ENCODE measurements at regions of chr15 and their contacts with region 1.

Region 1: GRCh38 chr15:90320061-90320884 is 31.8 kb upstream of the ZNF774 start:
- DNase-seq: peak; percentile 77
- ATAC-seq: peak; percentile 99
- H3K4me3 Mint-ChIP-seq: no peak overlapping the region
- H3K27ac Mint-ChIP-seq: no peak overlapping the region
- H3K4me1 Mint-ChIP-seq: peaks cover 2% of the 10 kb centered on the region
- H3K27me3 Mint-ChIP-seq: no peaks in the 10 kb centered on the region
- CTCF ChIP-seq: peak; percentile 97

Region 2: GRCh38 chr15:90071208-90071807 is 249.0 kb before region 1 on chr15:
- CTCF ChIA-PET with region 1: no interaction called
- POLR2A ChIA-PET with region 1: no interaction called
- intact Hi-C with region 1: no loop called
- DNase-seq: peak; percentile 93
- ATAC-seq: peak; percentile 94
- H3K4me3 Mint-ChIP-seq: no peak overlapping the region
- H3K27ac Mint-ChIP-seq: no peak overlapping the region
- H3K4me1 Mint-ChIP-seq: peaks cover 17% of the 10 kb centered on the region
- H3K27me3 Mint-ChIP-seq: no peaks in the 10 kb centered on the region
- CTCF ChIP-seq: peak; percentile 86

Region 3: GRCh38 chr15:90300988-90301706 is 19.1 kb before region 1 on chr15:
- CTCF ChIA-PET with region 1: interaction called, 90 read pairs
- POLR2A ChIA-PET with region 1: no interaction called
- intact Hi-C with region 1: no loop called
- DNase-seq: peak; percentile 82
- ATAC-seq: peak; percentile 82
- H3K4me3 Mint-ChIP-seq: no peak overlapping the region
- H3K27ac Mint-ChIP-seq: no peak overlapping the region
- H3K4me1 Mint-ChIP-seq: peaks cover 30% of the 10 kb centered on the region
- H3K27me3 Mint-ChIP-seq: peaks cover under 1% of the 10 kb centered on the region
- CTCF ChIP-seq: peak; percentile 89

Region 4: DNA sequence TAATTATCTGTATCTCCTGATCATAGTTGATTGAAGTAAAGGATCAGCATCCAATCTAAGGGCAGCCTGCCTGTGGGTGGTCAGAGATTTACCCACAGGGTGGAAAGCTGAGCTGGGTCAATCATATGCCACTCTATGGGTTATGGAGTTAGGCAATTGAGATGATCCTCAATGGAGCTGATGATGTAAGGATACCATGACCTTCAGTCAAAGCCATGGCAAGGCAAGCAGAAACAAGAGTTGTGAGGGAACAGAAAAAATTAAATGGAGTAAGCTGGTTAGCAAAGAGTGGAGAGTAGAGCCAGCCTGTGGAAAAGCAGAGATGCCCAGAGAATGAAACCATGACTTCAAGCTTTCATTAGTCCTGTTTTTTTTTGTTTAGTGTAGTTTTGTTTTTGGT is 62.0 kb after region 1 on chr15:
- CTCF ChIA-PET with region 1: interaction called, 12 read pairs
- POLR2A ChIA-PET with region 1: no interaction called
- intact Hi-C with region 1: no loop called
- DNase-seq: no peak
- ATAC-seq: no peak
- H3K4me3 Mint-ChIP-seq: no peak overlapping the region
- H3K27ac Mint-ChIP-seq: no peak overlapping the region
- H3K4me1 Mint-ChIP-seq: peaks cover 24% of the 10 kb centered on the region
- H3K27me3 Mint-ChIP-seq: no peaks in the 10 kb centered on the region
- CTCF ChIP-seq: no peak

Region 5: DNA sequence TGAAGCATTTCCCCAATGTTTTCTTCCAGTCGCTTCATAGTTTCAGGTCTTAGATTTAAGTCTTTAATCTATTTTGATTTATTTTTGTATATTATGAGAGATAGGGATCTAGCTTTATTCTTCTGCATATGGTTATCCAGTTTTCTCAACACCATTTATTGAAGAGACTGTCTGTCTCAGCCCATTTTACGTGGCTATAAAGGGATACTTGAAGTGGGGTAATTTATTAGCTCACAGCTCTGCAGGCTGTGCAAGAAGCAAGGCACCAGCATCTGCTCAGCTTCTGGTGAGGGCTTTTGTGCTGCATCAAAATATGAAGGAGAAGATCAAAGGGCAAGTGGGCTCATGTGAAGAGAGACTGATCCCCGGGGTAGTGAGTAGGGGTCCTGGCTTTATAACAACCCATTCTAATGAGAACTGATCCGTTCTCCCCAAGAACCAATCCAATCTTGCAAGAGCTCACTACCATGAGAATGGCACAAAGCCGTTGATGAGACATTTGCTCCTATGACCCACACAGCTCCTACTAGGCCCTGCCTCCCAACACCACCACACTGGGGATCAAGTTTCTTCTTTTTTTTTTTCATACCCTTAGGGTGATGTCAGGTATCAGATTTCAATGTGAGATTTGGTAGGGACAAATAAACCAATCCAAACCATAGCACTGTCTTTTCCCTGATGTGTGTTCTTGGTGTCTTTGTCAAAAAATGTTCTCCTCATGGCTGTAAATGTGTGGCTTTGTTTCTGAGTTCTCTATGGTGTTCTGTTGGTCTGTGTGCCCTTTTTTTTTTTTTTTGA is 131.0 kb after region 1 on chr15:
- CTCF ChIA-PET with region 1: interaction called, 40 read pairs
- POLR2A ChIA-PET with region 1: no interaction called
- intact Hi-C with region 1: no loop called
- DNase-seq: no peak
- ATAC-seq: no peak
- H3K4me3 Mint-ChIP-seq: no peak overlapping the region
- H3K27ac Mint-ChIP-seq: peak overlapping the region; percentile 10
- H3K4me1 Mint-ChIP-seq: no peaks in the 10 kb centered on the region
- H3K27me3 Mint-ChIP-seq: no peaks in the 10 kb centered on the region
- CTCF ChIP-seq: no peak

Region 6: GRCh38 chr15:90489514-90489913 is 169.2 kb after region 1 on chr15:
- CTCF ChIA-PET with region 1: interaction called, 22 read pairs
- POLR2A ChIA-PET with region 1: no interaction called
- intact Hi-C with region 1: no loop called
- DNase-seq: no peak
- ATAC-seq: no peak
- H3K4me3 Mint-ChIP-seq: no peak overlapping the region
- H3K27ac Mint-ChIP-seq: no peak overlapping the region
- H3K4me1 Mint-ChIP-seq: peaks cover 12% of the 10 kb centered on the region
- H3K27me3 Mint-ChIP-seq: no peaks in the 10 kb centered on the region
- CTCF ChIP-seq: no peak

Region 7: DNA sequence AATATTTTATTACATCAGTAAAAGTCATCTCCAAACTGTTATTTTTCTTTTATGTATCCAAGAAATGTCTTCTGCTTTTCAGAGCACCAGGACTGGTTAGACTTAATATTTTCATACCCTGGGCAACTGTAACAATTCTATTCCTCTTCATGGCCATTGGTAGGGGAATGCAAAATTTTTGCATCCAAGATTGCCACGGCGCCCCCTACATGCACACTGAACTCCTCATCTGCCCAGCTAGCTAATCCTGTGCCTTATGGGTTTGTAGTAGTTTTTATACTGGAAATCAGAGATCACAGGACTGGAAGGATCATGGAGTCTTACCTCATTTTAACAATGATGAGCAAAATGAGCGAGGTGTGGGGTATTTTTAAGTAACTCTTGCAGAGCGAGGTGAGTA is 283.6 kb after region 1 on chr15:
- CTCF ChIA-PET with region 1: interaction called, 10 read pairs
- POLR2A ChIA-PET with region 1: no interaction called
- intact Hi-C with region 1: no loop called
- DNase-seq: peak; percentile 67
- ATAC-seq: peak; percentile 47
- H3K4me3 Mint-ChIP-seq: no peak overlapping the region
- H3K27ac Mint-ChIP-seq: peak overlapping the region; percentile 23
- H3K4me1 Mint-ChIP-seq: peaks cover 33% of the 10 kb centered on the region
- H3K27me3 Mint-ChIP-seq: no peaks in the 10 kb centered on the region
- CTCF ChIP-seq: peak; percentile 35

Measured in activated CD8-positive, alpha-beta T cell treated with anti-CD3 and anti-CD28 coated beads for 36 hours (primary cell).